CD4-positive, alpha-beta T cell (primary cell): ENCODE measurements at regions of chr16 and their contacts with region 1.

Region 1: DNA sequence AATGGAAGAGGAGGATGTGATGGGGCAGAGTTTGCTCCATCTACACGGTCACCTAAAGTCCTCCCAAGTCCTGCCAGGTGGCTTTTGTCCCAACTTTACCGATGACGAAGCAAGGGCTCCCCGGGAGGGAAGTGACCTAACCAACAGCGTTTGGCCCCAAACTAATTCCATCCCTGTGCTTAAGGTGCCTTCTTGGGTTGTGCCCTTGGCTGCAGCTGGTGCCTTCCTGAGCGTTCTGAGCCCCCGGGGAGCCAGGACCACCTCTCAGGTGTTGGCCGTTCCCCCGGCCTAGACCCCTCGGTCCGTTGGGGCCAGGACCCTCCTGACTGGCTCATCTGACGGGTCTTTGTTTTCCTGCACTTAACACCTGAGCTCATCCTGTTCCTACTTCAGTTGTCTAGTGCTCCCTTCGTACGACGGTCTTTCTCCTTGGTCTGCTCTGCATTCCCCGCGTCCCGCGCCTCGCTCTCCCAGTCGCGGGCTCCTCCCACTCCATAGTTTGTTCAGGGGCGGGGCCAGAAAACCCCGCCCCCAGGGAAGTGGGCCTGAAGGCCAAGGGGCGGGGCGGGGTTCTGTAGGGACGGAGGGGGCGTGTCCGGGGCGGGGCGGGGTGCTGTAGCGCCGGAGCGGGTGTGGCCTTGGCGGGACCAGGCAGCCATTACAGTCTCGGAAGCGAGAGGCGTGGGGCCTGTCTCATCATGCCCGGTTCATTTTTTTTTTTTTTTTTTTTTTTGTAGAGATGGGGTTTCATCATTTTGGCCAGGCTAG is 822 bp upstream of the ZSCAN10 start:
- DNase-seq: peak; percentile 78 to 97 (median 88)
- ATAC-seq: peak; percentile 82
- H3K4me3 ChIP-seq: peak overlapping the region; percentile 48
- H3K4me3 Mint-ChIP-seq: peak overlapping the region; percentile 82
- H3K27ac ChIP-seq: peak overlapping the region in 1 of 2 donors; percentile 18
- H3K27ac Mint-ChIP-seq: peak overlapping the region; percentile 68
- H3K4me1 ChIP-seq: peaks cover 49% of the 10 kb centered on the region
- H3K4me1 Mint-ChIP-seq: peaks cover 71% of the 10 kb centered on the region
- H3K27me3 ChIP-seq: no peaks in the 10 kb centered on the region
- H3K27me3 Mint-ChIP-seq: no peaks in the 10 kb centered on the region
- CTCF ChIP-seq: no peak

Region 2: DNA sequence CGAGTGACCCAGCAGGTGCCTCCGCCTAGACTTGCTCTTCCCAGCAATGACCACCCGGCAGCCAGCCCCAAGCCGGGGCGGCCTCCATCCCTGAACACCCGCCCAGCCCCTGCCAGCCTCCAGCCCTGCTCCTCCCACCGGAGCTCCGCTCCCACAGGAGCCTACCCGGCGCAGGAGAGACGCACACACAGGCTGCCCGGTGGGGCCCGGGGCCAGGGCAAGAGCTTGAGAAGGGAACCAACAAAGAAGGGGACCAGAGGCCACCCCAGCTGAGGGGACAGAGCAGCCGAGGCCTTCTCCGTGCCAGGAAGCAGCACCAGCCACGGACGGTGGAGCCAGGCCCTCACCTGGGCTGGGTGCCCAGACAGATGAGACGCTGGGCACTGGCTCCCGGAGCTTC is 978.1 kb before region 1 on chr16:
- CTCF ChIA-PET with region 1: no interaction called
- POLR2A ChIA-PET with region 1: no interaction called
- intact Hi-C with region 1: no loop called
- DNase-seq: no peak
- ATAC-seq: no peak
- H3K4me3 ChIP-seq: no peak overlapping the region
- H3K4me3 Mint-ChIP-seq: no peak overlapping the region
- H3K27ac ChIP-seq: no peak overlapping the region
- H3K27ac Mint-ChIP-seq: peak overlapping the region; percentile 9
- H3K4me1 ChIP-seq: peaks cover 2% of the 10 kb centered on the region
- H3K4me1 Mint-ChIP-seq: peaks cover 8% of the 10 kb centered on the region
- H3K27me3 ChIP-seq: no peaks in the 10 kb centered on the region
- H3K27me3 Mint-ChIP-seq: no peaks in the 10 kb centered on the region
- CTCF ChIP-seq: no peak

Region 3: DNA sequence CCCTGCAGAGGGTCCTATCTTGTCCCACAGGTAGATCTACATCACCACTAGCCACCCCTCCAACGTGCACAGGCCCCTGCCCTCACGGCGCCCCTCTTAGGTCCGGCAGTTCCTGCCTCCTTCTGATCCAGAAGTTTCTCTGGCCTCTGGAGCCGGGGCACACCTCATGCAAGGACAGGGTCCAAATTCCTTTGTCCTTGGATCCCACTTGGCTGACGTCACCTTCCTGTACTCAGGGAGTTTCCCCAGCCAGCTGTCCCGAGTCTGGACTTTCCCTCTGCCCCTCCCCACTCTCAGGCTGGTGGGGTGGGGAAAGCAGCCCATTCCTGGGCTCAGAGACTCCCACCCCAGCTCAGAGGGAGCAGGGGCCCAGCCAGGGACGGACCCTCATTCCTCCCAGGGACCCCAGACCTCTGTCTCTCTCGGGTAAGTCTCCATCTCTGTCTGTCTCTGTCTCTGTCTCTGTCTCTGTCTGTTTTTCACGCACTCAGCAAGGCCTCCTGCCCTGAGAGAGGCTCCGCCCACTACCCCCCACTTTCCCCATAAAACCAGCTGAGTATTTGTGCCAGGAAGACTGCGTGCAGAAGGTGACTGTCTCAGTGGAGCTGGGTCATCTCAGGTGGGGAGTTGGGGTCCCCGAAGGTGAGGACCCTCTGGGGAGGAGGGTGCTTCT is 34.7 kb before region 1 on chr16 and contains the start of gene IL32:
- CTCF ChIA-PET with region 1: interaction called, 3 read pairs
- POLR2A ChIA-PET with region 1: interaction called, 17 read pairs
- intact Hi-C with region 1: no loop called
- DNase-seq: peak; percentile 46 to 88 (median 68)
- ATAC-seq: peak; percentile 65
- H3K4me3 ChIP-seq: peak within 1 kb of the TSS; percentile 99
- H3K4me3 Mint-ChIP-seq: peak within 1 kb of the TSS; percentile 99
- H3K27ac ChIP-seq: peak within 1 kb of the TSS; percentile 85 to 98
- H3K27ac Mint-ChIP-seq: peak within 1 kb of the TSS; percentile 97
- H3K4me1 ChIP-seq: peaks cover 78% of the 10 kb centered on the region
- H3K4me1 Mint-ChIP-seq: peaks cover 67% of the 10 kb centered on the region
- H3K27me3 ChIP-seq: no peaks in the 10 kb centered on the region
- H3K27me3 Mint-ChIP-seq: no peaks in the 10 kb centered on the region
- CTCF ChIP-seq: no peak
- total RNA-seq, gene IL32: 378 to 383 TPM